SK-N-SH (cell line): ENCODE measurements at regions of chr1 and their contacts with region 1.

Region 1: GRCh38 chr1:78607334-78607927 is 12.8 kb upstream of the IFI44L start:
- DNase-seq: peak; percentile 19
- H3K4me3 ChIP-seq: no peak overlapping the region
- H3K27ac ChIP-seq: no peak overlapping the region
- H3K4me1 ChIP-seq: peaks cover 0 to 5% of the 10 kb centered on the region in 2 experiments; a peak in 1 of 4 replicates
- H3K27me3 ChIP-seq: no peaks in the 10 kb centered on the region
- CTCF ChIP-seq: peak; percentile 78
- EP300 ChIP-seq: no peak
- RAD21 ChIP-seq: peak; percentile 83

Region 2: DNA sequence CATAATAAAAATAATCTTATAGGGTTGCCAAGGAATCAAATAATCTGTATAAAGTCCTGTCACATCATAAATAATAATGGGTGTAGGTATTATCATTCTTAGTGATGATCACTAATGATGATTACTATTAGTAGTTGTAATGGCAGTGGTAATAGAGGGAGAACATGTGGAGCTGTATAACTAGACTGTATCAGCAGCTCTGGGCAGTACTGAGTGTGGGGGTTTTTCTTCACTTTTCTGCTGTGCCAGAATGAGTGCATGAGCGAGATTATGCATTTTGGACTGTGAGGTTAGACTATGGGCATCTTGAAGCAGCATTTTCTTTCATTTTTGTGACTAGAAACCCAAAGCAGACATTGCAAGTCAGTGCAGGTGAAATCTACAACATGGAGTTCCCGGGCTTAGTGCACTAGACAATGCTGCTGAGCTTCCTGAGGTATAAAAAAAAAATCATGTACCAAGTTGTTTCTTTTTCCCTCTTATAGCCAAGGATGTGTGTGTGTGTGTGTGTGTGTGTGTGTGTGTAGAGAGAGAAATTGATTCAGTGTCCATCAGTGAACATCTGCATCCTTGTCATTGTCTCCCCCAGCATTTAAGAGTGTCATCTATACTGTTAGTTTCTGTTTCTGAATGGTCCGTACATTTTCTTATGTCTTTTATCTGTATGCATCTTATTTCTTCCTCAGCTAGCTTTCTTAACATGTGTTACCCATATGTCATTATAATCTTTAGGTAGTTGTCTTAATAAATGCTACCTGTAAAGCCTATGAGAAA is 475.1 kb before region 1 on chr1:
- CTCF ChIA-PET with region 1: interaction called, 207 read pairs
- POLR2A ChIA-PET with region 1: no interaction called
- DNase-seq: no peak
- H3K4me3 ChIP-seq: no peak overlapping the region
- H3K27ac ChIP-seq: no peak overlapping the region
- H3K4me1 ChIP-seq: no peaks in the 10 kb centered on the region
- H3K27me3 ChIP-seq: no peaks in the 10 kb centered on the region
- CTCF ChIP-seq: no peak
- EP300 ChIP-seq: no peak
- RAD21 ChIP-seq: no peak

Region 3: GRCh38 chr1:78145105-78145580 is 462.3 kb before region 1 on chr1:
- CTCF ChIA-PET with region 1: interaction called, 207 read pairs
- POLR2A ChIA-PET with region 1: no interaction called
- DNase-seq: peak; percentile 48
- H3K4me3 ChIP-seq: no peak overlapping the region; a peak in 1 of 4 replicates
- H3K27ac ChIP-seq: peak overlapping the region in 1 of 2 experiments; percentile 62; a peak in 1 of 4 replicates
- H3K4me1 ChIP-seq: peaks cover 10 to 11% of the 10 kb centered on the region in 2 experiments; a peak in 3 of 4 replicates
- H3K27me3 ChIP-seq: no peaks in the 10 kb centered on the region
- CTCF ChIP-seq: peak; percentile 95
- EP300 ChIP-seq: no peak
- RAD21 ChIP-seq: peak; percentile 98

Region 4: GRCh38 chr1:78511334-78511733 is 96.1 kb before region 1 on chr1:
- CTCF ChIA-PET with region 1: no interaction called
- POLR2A ChIA-PET with region 1: no interaction called
- DNase-seq: no peak
- H3K4me3 ChIP-seq: no peak overlapping the region
- H3K27ac ChIP-seq: no peak overlapping the region
- H3K4me1 ChIP-seq: no peaks in the 10 kb centered on the region; a peak in 1 of 4 replicates
- H3K27me3 ChIP-seq: no peaks in the 10 kb centered on the region
- CTCF ChIP-seq: no peak
- EP300 ChIP-seq: no peak
- RAD21 ChIP-seq: no peak

Region 5: GRCh38 chr1:78591971-78592370 is 15.5 kb before region 1 on chr1:
- CTCF ChIA-PET with region 1: interaction called, 22 read pairs
- POLR2A ChIA-PET with region 1: no interaction called
- DNase-seq: no peak
- H3K4me3 ChIP-seq: no peak overlapping the region
- H3K27ac ChIP-seq: no peak overlapping the region
- H3K4me1 ChIP-seq: no peaks in the 10 kb centered on the region
- H3K27me3 ChIP-seq: no peaks in the 10 kb centered on the region
- CTCF ChIP-seq: no peak
- EP300 ChIP-seq: no peak
- RAD21 ChIP-seq: no peak

Region 6: DNA sequence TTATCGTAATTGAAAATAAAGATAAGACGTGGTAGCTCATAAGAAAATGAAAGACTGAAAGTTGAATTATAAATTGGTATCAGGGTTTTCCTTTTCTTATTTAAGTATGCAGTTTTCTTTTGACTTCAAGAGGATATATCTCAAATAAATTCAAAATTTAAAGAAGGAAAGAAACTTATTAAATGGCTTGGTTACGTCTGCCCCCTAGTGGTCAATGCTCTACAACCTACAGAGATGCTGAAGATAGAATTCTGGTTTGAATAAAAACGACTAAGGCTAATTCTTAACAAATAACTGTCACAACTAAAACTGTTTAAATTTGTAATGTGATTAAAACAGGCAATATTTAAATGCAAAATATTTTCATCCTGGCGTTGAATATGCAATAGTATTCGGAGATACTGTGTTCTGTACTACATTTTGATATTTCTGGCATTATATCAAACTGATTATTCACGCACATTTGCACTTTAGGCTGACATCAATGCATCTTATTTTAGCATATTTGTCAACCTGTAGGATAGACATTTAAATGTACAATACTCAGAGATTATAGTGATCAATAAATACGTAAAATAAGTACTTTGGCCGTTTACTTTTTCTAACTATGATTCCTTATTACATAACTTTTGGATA is 69.0 kb after region 1 on chr1:
- CTCF ChIA-PET with region 1: interaction called, 10 read pairs
- POLR2A ChIA-PET with region 1: no interaction called
- DNase-seq: peak; percentile 28
- H3K4me3 ChIP-seq: no peak overlapping the region; a peak in 1 of 4 replicates
- H3K27ac ChIP-seq: no peak overlapping the region
- H3K4me1 ChIP-seq: no peaks in the 10 kb centered on the region
- H3K27me3 ChIP-seq: no peaks in the 10 kb centered on the region
- CTCF ChIP-seq: peak; percentile 93
- EP300 ChIP-seq: no peak
- RAD21 ChIP-seq: peak; percentile 84

Region 7: GRCh38 chr1:78715181-78715661 is 107.8 kb after region 1 on chr1:
- CTCF ChIA-PET with region 1: no interaction called
- POLR2A ChIA-PET with region 1: no interaction called
- DNase-seq: no peak
- H3K4me3 ChIP-seq: no peak overlapping the region
- H3K27ac ChIP-seq: peak overlapping the region; percentile 75 to 82
- H3K4me1 ChIP-seq: peaks cover 2 to 39% of the 10 kb centered on the region in 2 experiments; a peak in 2 of 4 replicates
- H3K27me3 ChIP-seq: no peaks in the 10 kb centered on the region
- CTCF ChIP-seq: no peak
- EP300 ChIP-seq: peak in 1 of 2 experiments; percentile 90; a peak in 2 of 4 replicates
- RAD21 ChIP-seq: no peak

Region 8: DNA sequence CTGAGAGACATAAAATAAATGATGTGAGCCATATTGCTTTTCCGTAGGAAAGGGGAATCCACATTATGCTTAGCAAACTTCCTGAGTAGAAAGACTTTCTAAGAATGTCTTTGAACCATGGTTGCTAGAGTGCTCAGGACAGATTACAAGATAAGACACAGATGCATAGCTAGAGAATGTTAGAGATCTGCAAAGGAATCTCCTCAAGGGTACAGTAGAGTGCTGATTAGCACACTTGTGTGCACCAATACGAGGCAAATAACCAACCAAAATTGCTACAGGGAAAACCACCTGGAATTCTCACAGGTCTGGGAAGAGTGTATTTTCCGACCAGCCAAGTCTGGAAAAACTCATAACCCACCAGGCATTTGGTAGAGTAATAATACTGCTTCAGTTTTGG is 636.1 kb after region 1 on chr1:
- CTCF ChIA-PET with region 1: no interaction called
- POLR2A ChIA-PET with region 1: no interaction called
- DNase-seq: no peak
- H3K4me3 ChIP-seq: no peak overlapping the region
- H3K27ac ChIP-seq: no peak overlapping the region
- H3K4me1 ChIP-seq: no peaks in the 10 kb centered on the region
- H3K27me3 ChIP-seq: no peaks in the 10 kb centered on the region
- CTCF ChIP-seq: no peak
- EP300 ChIP-seq: no peak
- RAD21 ChIP-seq: no peak